ENCODE measurements at regions of chr11 and their contacts with region 1.

Region 1: DNA sequence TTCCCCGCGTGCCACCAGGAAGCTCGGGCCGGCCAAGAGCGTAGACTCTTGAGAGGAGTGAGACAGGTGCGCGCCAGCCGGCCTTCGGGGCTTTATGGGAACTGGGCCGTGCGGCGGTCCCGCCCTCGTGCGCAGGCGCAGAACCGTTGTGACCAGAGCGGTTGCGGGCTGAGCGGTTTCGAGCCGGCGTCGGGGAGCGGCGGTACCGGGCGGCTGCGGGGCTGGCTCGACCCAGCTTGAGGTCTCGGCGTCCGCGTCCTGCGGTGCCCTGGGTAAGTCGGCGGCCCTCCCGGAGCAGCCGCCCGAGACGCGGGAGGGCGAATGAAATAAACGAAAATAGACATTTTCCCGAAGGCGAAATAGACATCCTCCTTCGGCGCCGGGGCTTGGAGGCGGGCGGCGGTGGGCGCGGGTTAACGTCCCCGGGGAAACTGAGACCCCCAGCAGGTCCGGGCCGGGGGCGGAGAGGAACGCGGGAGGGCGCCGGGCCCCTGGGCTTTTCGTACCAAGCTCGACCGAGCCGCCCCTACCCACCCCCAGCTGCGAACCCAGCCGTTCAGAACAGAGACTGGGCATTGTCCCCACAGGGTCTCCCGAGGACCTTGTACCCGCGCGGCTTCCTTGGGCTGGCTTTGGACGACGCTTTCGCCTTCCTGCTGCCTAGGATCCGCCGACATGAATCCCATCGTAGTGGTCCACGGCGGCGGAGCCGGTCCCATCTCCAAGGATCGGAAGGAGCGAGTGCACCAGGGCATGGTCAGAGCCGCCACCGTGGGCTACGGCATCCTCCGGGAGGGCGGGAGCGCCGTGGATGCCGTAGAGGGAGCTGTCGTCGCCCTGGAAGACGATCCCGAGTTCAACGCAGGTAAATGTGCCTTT is at the start of gene ASRGL1:
- DNase-seq: peak; percentile 76
- H3K4me3 Mint-ChIP-seq: peak within 1 kb of the TSS; percentile 85
- H3K27ac Mint-ChIP-seq: peak within 1 kb of the TSS; percentile 59
- H3K4me1 Mint-ChIP-seq: peaks cover 13% of the 10 kb centered on the region
- H3K27me3 Mint-ChIP-seq: peaks cover 32% of the 10 kb centered on the region
- total RNA-seq, gene ASRGL1: 4.8 and 5.7 TPM in 2 replicates

Region 2: DNA sequence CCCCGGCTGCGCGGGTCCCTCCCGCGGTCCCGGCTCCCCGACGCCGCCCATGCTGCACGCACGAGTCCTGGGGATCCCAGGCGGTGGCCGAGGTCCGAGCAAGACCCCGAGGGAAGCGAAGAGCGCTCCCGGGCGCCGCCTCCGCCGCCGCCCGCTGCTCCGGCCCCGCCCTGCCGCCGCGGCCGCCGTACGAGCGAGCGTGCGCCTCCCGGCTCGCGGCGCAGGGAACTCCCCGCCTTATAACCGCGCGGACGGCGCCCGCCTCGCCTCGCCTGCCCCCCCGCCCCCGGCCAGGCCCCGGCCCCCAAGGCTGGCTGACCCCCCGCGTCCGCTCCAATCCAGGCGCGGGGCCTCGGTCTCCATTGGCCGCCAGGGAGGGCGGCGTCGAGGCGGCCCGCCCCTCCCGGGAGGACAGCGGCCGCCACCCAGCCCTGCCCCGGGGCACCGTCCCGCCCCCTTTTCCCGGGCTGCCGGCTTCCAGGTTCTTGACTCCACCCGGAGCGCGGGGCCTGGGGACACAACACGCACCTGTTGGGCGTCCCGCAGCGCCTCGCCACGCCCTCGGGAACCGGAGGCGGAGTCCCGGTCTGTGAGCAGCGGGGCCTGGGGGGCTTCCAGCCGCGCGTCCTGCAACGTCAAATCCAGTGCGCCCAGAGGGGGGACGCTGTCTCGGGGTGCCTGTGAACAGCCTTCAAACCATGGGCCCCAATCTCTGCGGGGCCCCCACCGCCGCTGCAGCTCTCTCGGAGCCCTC is 446.0 kb before region 1 on chr11 and contains the start of gene FADS3:
- intact Hi-C with region 1: no loop called
- DNase-seq: peak; percentile 64
- H3K4me3 Mint-ChIP-seq: peak within 1 kb of the TSS; percentile 88
- H3K27ac Mint-ChIP-seq: peak within 1 kb of the TSS; percentile 29
- H3K4me1 Mint-ChIP-seq: peaks cover 3% of the 10 kb centered on the region
- H3K27me3 Mint-ChIP-seq: peaks cover 6% of the 10 kb centered on the region
- total RNA-seq, gene FADS3: 9.0 and 14.2 TPM in 2 replicates

Region 3: GRCh38 chr11:61978703-61979661 is 358.6 kb before region 1 on chr11:
- intact Hi-C with region 1: no loop called
- DNase-seq: no peak
- H3K4me3 Mint-ChIP-seq: no peak overlapping the region
- H3K27ac Mint-ChIP-seq: no peak overlapping the region
- H3K4me1 Mint-ChIP-seq: peaks cover 17% of the 10 kb centered on the region
- H3K27me3 Mint-ChIP-seq: no peaks in the 10 kb centered on the region

Region 4: GRCh38 chr11:62315431-62315830 is 22.1 kb before region 1 on chr11:
- intact Hi-C with region 1: loop called (anchors 1 kb)
- DNase-seq: no peak
- H3K4me3 Mint-ChIP-seq: no peak overlapping the region
- H3K27ac Mint-ChIP-seq: no peak overlapping the region
- H3K4me1 Mint-ChIP-seq: peaks cover 5% of the 10 kb centered on the region
- H3K27me3 Mint-ChIP-seq: peaks cover 16% of the 10 kb centered on the region

Region 5: GRCh38 chr11:62372871-62373270 is 35.3 kb after region 1 on chr11:
- intact Hi-C with region 1: loop called (anchors 1 kb)
- DNase-seq: no peak
- H3K4me3 Mint-ChIP-seq: no peak overlapping the region
- H3K27ac Mint-ChIP-seq: no peak overlapping the region
- H3K4me1 Mint-ChIP-seq: peaks cover 19% of the 10 kb centered on the region
- H3K27me3 Mint-ChIP-seq: no peaks in the 10 kb centered on the region

Measured in activated T-helper 1 cell treated with anti-CD3 and anti-CD28 coated beads, Interleukin-12 subunit alpha, Interleukin-12 subunit beta, Interleukin-2, Interleukin-4 antibody, amounts not matched to agents 30 ng/mL and 10 ng/mL and 1 ng/mL, durations not matched to agents 14 hours and 24 hours and 36 hours (primary cell).